ENCODE measurements at regions of chr16 and their contacts with region 1.

Region 1: GRCh38 chr16:7492122-7492521 is 159.5 kb downstream of the RBFOX1 start:
- DNase-seq: no peak
- ATAC-seq: no peak
- H3K4me3 ChIP-seq: no peak overlapping the region
- H3K27ac ChIP-seq: no peak overlapping the region
- H3K4me1 ChIP-seq: no peaks in the 10 kb centered on the region
- H3K27me3 ChIP-seq: no peaks in the 10 kb centered on the region

Region 2: DNA sequence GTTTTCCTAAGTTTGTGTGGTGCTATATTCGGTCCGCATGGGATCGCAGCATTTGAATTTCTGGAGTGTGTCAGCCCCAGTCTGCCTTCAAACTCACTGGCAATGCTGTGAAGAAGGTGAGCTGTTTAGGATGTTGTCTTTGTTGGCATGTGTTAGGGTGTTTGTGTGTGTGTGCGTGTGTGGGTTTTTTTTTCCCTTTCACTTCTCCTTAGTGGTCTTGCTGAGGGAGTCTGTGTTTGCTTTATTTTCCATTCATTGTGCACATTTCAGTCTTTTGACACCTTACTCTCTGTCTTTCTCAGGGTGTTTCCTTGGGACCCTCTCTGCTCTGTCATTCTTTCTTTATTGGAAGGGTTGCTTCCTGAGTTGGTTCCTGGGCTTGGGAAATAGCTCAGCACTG is 187.2 kb before region 1 on chr16:
- intact Hi-C with region 1: loop called in 1 of 4 experiments (anchors 5 kb)
- DNase-seq: no peak
- ATAC-seq: no peak
- H3K4me3 ChIP-seq: no peak overlapping the region
- H3K27ac ChIP-seq: no peak overlapping the region
- H3K4me1 ChIP-seq: peaks cover 2% of the 10 kb centered on the region
- H3K27me3 ChIP-seq: no peaks in the 10 kb centered on the region

Region 3: DNA sequence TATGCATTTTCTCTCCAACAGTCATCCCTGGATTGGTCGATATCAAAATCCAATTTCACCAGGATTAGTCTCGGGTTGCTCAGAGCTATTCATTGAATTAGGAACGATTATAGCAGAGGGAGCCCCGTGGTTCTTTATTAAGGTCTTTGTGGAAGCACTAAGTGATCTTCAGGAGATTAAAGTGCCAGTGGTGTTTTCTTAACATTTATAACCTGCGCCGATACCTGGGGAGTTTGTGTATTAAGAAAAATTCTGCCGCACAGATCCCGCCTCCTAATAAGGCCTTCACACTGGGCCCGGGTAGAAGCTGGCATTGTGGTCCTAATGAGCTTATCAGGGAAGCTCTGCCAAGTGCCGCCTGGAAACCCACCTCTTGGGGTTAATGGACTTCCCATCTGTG is 79.2 kb after region 1 on chr16:
- intact Hi-C with region 1: no loop called
- DNase-seq: no peak
- ATAC-seq: no peak
- H3K4me3 ChIP-seq: no peak overlapping the region
- H3K27ac ChIP-seq: no peak overlapping the region
- H3K4me1 ChIP-seq: no peaks in the 10 kb centered on the region
- H3K27me3 ChIP-seq: no peaks in the 10 kb centered on the region